Right ventricle myocardium inferior (tissue), 1 donor: ENCODE measurements at regions of chr2 and their contacts with region 1.

Region 1: GRCh38 chr2:3303583-3304406 is 73.8 kb downstream of the EIPR1 start:
- DNase-seq: peak; percentile 92
- ATAC-seq: peak; percentile 96

Region 2: GRCh38 chr2:1854729-1855547 is 1448.9 kb before region 1 on chr2:
- intact Hi-C with region 1: loop called (anchors 10 kb)
- DNase-seq: no peak
- ATAC-seq: peak; percentile 79

Region 3: DNA sequence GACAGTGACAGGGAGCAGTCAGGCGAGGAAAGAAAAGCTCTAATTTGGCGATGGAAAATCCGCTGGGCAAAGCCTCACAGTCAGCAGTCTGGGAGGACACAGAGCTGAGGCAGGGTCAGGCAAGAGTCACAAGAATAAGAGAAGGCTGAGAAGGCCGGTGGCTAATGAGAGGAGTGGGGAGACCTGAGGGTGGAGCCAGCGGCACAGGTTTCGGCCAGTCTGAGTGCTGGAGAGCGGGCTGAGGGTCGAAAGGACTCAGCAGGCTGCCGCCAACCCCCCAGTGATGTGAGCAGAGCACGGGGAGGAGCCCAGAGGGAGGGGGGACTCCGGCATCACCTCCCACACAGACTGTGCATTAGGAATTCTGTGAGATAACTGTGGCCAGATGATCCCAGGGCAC is 472.2 kb before region 1 on chr2:
- intact Hi-C with region 1: loop called (anchors 5 kb)
- DNase-seq: no peak
- ATAC-seq: no peak

Region 4: GRCh38 chr2:3512086-3512485 is 208.3 kb after region 1 on chr2:
- intact Hi-C with region 1: no loop called
- DNase-seq: no peak
- ATAC-seq: no peak